CD8-positive, alpha-beta T cell (primary cell): ENCODE measurements at regions of chr11 and their contacts with region 1.

Region 1: GRCh38 chr11:29656597-29656996 is 360.2 kb downstream of the KCNA4 start:
- DNase-seq: no peak
- ATAC-seq: no peak
- H3K4me3 ChIP-seq: no peak overlapping the region
- H3K4me3 Mint-ChIP-seq: no peak overlapping the region
- H3K27ac ChIP-seq: no peak overlapping the region
- H3K27ac Mint-ChIP-seq: no peak overlapping the region
- H3K4me1 ChIP-seq: no peaks in the 10 kb centered on the region
- H3K4me1 Mint-ChIP-seq: no peaks in the 10 kb centered on the region
- H3K27me3 ChIP-seq: no peaks in the 10 kb centered on the region
- H3K27me3 Mint-ChIP-seq: no peaks in the 10 kb centered on the region
- CTCF ChIP-seq: no peak

Region 2: DNA sequence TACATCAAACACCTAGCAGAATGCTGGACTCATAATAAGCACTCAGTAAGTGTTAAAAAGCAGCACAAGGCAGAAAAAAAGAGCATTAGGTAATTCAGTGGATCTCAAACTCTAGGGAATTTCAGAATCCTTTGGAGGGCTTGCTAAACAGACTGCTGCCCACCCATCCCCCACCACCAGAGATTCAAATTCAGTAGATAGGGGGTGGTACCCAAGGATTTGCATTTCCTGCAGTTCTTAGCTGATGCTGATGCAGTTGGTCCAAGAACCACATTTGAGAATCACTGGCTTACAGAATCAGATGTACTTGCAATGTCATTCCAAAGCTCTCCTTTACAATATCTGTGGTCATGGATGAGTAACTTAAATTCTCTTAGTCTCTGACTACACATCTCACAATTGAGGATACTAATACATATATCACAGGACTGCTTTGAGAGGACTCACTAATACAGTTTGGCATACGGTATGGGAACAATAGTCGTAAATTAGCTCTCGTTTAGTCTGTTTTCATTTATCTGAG is 304.3 kb before region 1 on chr11:
- CTCF ChIA-PET with region 1: no interaction called
- POLR2A ChIA-PET with region 1: no interaction called
- intact Hi-C with region 1: no loop called
- DNase-seq: no peak
- ATAC-seq: no peak
- H3K4me3 ChIP-seq: no peak overlapping the region
- H3K4me3 Mint-ChIP-seq: no peak overlapping the region
- H3K27ac ChIP-seq: no peak overlapping the region
- H3K27ac Mint-ChIP-seq: no peak overlapping the region
- H3K4me1 ChIP-seq: no peaks in the 10 kb centered on the region
- H3K4me1 Mint-ChIP-seq: no peaks in the 10 kb centered on the region
- H3K27me3 ChIP-seq: no peaks in the 10 kb centered on the region
- H3K27me3 Mint-ChIP-seq: no peaks in the 10 kb centered on the region
- CTCF ChIP-seq: no peak

Region 3: DNA sequence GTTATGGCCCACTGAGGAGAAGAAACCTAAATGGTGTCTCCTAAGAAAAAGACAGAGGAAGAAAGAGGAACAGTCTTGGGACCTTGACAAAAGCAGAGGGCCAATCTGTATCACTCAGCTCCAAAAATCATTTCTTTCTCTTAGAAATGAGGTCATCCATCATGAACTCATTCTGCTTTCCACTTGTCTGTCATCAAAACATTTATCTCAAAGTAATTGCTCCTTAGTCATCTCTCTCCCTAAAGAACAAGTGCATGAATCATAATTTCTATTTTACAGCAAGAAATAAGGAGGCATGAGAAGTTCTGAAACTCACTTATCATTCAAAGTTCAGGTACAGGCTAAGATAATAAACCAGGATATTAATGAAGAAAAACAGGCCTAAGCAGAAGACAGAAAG is 15.4 kb before region 1 on chr11:
- CTCF ChIA-PET with region 1: no interaction called
- POLR2A ChIA-PET with region 1: no interaction called
- intact Hi-C with region 1: loop called in 1 of 2 experiments (anchors 1 kb)
- DNase-seq: no peak
- ATAC-seq: no peak
- H3K4me3 ChIP-seq: no peak overlapping the region
- H3K4me3 Mint-ChIP-seq: no peak overlapping the region
- H3K27ac ChIP-seq: no peak overlapping the region
- H3K27ac Mint-ChIP-seq: no peak overlapping the region
- H3K4me1 ChIP-seq: no peaks in the 10 kb centered on the region
- H3K4me1 Mint-ChIP-seq: no peaks in the 10 kb centered on the region
- H3K27me3 ChIP-seq: no peaks in the 10 kb centered on the region
- H3K27me3 Mint-ChIP-seq: no peaks in the 10 kb centered on the region
- CTCF ChIP-seq: no peak